ENCODE measurements at regions of chr14 and their contacts with region 1.

Region 1: DNA sequence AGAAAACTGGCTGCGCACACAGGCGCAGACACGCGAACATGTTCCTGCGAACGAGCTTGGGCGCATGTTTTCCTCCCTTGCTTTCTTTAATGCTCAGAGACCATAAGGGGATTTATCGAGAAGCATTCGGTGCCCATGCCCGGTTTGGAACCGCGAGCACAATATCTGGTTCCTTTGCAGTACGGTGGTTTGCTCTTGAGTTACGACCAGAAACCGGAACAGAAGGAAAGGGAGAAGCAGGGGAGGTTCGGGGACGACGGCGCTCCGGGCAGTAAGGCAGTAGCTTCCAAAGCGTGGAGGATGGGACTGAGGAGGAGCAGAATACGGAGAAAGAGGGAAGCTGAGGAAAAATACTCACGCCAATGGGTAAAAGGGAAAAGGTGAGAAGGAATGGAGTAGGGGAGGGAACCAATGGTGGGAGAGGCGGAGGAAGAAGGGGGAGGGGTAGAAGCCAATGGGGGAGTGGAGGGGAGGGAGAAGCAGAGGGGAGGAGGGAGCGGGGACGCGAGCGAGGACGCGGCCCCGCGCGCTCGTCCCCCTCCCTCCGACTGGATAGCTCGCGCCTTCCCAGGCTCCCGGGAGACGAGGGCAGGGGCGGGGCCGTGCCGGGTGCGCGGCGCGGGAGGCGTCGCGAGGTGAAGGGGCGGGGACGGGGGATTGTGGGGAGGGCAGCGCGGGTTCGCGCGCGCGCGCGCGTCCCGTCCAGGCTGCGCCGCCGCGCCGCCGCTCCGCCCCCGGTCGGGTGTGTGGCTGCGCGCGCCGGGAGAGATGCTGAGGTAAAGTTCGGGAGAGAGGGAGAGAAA is 625 bp upstream of the ARHGAP5 start:
- DNase-seq: peak in 1 of 2 donors; percentile 95
- H3K4me3 ChIP-seq: peak overlapping the region; percentile 94 to 95
- H3K27ac ChIP-seq: peak overlapping the region; percentile 100
- H3K4me1 ChIP-seq: peaks cover 51% of the 10 kb centered on the region
- H3K27me3 ChIP-seq: no peaks in the 10 kb centered on the region
- CTCF ChIP-seq: no peak
- POLR2A ChIP-seq: peak in 1 of 2 donors; percentile 74

Region 2: DNA sequence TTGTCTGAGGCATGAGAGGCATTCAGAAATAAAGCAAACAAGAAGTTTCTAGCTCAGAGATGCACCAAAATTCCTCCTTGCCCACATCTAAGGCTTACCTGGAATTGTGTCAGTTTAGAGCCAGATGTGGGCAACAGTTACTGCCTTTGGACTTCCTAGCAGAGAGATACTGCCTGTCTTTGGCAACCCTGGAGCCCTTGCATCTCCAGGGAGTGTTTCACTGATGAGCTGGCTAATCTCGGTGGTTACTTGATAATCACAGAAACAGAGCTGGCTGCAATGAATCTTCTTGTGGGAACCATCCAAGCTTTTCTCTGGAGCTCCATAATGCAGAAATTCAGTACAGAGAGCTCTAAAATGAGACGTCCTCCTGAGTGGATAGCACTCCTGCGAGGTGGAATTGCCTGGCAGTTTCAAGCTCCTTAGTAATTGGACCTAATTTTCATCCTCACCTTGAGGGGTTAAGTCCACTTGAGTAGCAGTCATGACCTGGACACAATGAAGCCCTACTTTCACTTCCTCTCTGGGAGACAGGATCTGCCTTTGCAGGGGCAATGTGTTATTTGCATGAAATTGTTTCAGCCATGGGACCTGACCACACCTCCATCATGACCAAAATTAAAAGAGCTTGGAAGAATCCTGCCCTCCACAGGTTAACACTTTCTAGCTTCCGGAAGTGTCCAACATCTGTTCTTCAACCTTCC is 108.2 kb before region 1 on chr14:
- intact Hi-C with region 1: loop called (anchors 10 kb)
- DNase-seq: no peak
- H3K4me3 ChIP-seq: no peak overlapping the region
- H3K27ac ChIP-seq: no peak overlapping the region
- H3K4me1 ChIP-seq: peaks cover 50% of the 10 kb centered on the region
- H3K27me3 ChIP-seq: no peaks in the 10 kb centered on the region
- CTCF ChIP-seq: no peak
- POLR2A ChIP-seq: no peak

Region 3: DNA sequence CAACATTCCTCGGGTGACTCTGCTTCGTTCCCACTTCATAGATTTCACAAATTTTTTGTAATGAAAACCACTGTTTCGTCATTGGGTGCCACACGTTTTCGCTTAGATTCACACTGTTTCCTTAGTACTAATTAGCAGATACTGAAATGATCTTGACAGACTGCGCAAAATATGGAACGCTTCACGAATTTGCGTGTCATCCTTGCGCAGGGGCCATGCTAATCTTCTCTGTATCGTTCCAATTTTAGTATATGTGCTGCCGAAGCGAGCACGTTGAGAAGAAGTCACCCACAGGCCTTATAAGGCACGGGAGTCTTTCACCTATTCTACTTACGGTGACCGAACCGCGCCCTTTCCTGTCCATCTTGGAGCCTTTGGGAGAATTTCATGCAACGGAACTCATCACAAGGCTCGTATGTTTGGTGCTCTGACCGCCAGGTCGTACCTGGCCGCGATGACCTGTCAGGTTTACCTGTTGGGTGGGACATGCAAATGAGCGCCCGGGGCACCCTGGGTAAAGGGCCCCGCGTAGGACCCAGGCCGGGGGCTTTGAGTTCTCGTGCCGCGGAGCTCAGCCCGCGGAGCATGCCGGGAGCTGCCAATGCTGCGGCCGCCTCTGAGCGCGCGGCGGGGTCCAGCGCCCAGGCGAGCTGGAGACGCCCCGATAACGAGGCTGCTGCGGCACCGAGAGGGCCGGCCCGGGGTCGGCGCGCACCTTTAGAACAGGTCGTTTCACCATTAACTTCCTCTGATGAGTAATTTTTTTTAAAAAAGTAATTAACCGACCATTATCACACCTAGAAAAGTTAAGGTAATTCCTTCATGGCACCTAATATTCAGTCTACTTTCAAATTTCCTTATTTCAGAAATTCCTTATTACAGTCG is 126.8 kb after region 1 on chr14 and contains the start of gene RNU6-8:
- intact Hi-C with region 1: loop called (anchors 2 kb)
- DNase-seq: peak in 1 of 2 donors; percentile 94
- H3K4me3 ChIP-seq: peak within 1 kb of the TSS; percentile 63 to 69
- H3K27ac ChIP-seq: peak within 1 kb of the TSS; percentile 80
- H3K4me1 ChIP-seq: peaks cover 15% of the 10 kb centered on the region
- H3K27me3 ChIP-seq: no peaks in the 10 kb centered on the region
- CTCF ChIP-seq: no peak
- POLR2A ChIP-seq: peak in 1 of 2 donors; percentile 32
- total RNA-seq, gene RNU6-8: not detected

Measured in vagina (tissue), 2 donors.